ENCODE measurements at regions of chr5 and their contacts with region 1.

Region 1: GRCh38 chr5:95238560-95239325 is 46.2 kb downstream of the MCTP1 start:
- DNase-seq: peak; percentile 38
- H3K4me3 ChIP-seq: peak overlapping the region; percentile 22
- H3K27ac ChIP-seq: no peak overlapping the region
- H3K27me3 ChIP-seq: no peaks in the 10 kb centered on the region
- CTCF ChIP-seq: peak; percentile 55

Region 2: GRCh38 chr5:94884311-94884710 is 354.4 kb before region 1 on chr5:
- in situ Hi-C with region 1: no loop called
- DNase-seq: peak; percentile 26
- H3K4me3 ChIP-seq: no peak overlapping the region
- H3K27ac ChIP-seq: no peak overlapping the region
- H3K27me3 ChIP-seq: no peaks in the 10 kb centered on the region
- CTCF ChIP-seq: no peak

Region 3: GRCh38 chr5:94983861-94984535 is 254.7 kb before region 1 on chr5:
- in situ Hi-C with region 1: loop called (anchors 25 kb)
- DNase-seq: peak; percentile 12
- H3K4me3 ChIP-seq: no peak overlapping the region
- H3K27ac ChIP-seq: no peak overlapping the region
- H3K27me3 ChIP-seq: no peaks in the 10 kb centered on the region
- CTCF ChIP-seq: no peak